Natural killer cell (primary cell): ENCODE measurements at regions of chr16 and their contacts with region 1.

Region 1: GRCh38 chr16:12819126-12820117 is 15.7 kb upstream of the CPPED1 start:
- DNase-seq: peak; percentile 71 to 82
- ATAC-seq: peak; percentile 84 to 87 (median 87)
- H3K4me3 ChIP-seq: no peak overlapping the region
- H3K4me3 Mint-ChIP-seq: no peak overlapping the region
- H3K27ac ChIP-seq: no peak overlapping the region
- H3K27ac Mint-ChIP-seq: no peak overlapping the region
- H3K4me1 ChIP-seq: no peaks in the 10 kb centered on the region
- H3K4me1 Mint-ChIP-seq: no peaks in the 10 kb centered on the region
- H3K27me3 ChIP-seq: no peaks in the 10 kb centered on the region
- H3K27me3 Mint-ChIP-seq: peaks cover 10 to 20% of the 10 kb centered on the region in 2 donors
- CTCF ChIP-seq: peak; percentile 93

Region 2: GRCh38 chr16:12340151-12340733 is 479.2 kb before region 1 on chr16:
- intact Hi-C with region 1: loop called (anchors 5 kb)
- DNase-seq: peak in 1 of 2 donors; percentile 41
- ATAC-seq: no peak
- H3K4me3 ChIP-seq: no peak overlapping the region
- H3K4me3 Mint-ChIP-seq: no peak overlapping the region
- H3K27ac ChIP-seq: no peak overlapping the region
- H3K27ac Mint-ChIP-seq: no peak overlapping the region
- H3K4me1 ChIP-seq: no peaks in the 10 kb centered on the region
- H3K4me1 Mint-ChIP-seq: peaks cover 4 to 16% of the 10 kb centered on the region in 2 donors
- H3K27me3 ChIP-seq: no peaks in the 10 kb centered on the region
- H3K27me3 Mint-ChIP-seq: peaks cover 0 to under 1% of the 10 kb centered on the region in 2 donors
- CTCF ChIP-seq: no peak

Region 3: DNA sequence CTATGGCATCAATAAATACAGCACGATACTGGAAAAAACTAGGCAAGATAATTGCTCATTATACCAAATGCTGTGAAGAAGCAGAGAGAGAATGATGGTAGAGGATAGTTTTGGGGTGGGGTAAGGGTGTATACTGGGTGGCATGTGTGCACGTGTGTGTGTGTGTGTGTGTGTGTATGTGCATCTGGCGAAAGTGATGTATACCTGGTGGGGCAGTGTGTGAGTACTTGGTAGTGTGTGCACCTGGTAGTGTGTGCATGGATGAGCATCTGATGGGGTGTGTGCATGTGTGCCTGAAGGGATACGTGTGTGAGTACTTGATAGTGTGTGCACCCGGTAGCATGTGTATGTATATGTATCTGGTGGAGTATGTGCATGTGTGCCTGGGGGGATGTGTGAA is 363.1 kb before region 1 on chr16:
- intact Hi-C with region 1: loop called (anchors 1 kb)
- DNase-seq: no peak
- ATAC-seq: no peak
- H3K4me3 ChIP-seq: no peak overlapping the region
- H3K4me3 Mint-ChIP-seq: no peak overlapping the region
- H3K27ac ChIP-seq: no peak overlapping the region
- H3K27ac Mint-ChIP-seq: no peak overlapping the region
- H3K4me1 ChIP-seq: peaks cover 41% of the 10 kb centered on the region
- H3K4me1 Mint-ChIP-seq: peaks cover 24 to 40% of the 10 kb centered on the region in 2 donors
- H3K27me3 ChIP-seq: no peaks in the 10 kb centered on the region
- H3K27me3 Mint-ChIP-seq: no peaks in the 10 kb centered on the region
- CTCF ChIP-seq: no peak